Activated naive CD4-positive, alpha-beta T cell treated with anti-CD3 and anti-CD28 coated beads for 36 hours (primary cell): ENCODE measurements at regions of chr19 and their contacts with region 1.

Region 1: DNA sequence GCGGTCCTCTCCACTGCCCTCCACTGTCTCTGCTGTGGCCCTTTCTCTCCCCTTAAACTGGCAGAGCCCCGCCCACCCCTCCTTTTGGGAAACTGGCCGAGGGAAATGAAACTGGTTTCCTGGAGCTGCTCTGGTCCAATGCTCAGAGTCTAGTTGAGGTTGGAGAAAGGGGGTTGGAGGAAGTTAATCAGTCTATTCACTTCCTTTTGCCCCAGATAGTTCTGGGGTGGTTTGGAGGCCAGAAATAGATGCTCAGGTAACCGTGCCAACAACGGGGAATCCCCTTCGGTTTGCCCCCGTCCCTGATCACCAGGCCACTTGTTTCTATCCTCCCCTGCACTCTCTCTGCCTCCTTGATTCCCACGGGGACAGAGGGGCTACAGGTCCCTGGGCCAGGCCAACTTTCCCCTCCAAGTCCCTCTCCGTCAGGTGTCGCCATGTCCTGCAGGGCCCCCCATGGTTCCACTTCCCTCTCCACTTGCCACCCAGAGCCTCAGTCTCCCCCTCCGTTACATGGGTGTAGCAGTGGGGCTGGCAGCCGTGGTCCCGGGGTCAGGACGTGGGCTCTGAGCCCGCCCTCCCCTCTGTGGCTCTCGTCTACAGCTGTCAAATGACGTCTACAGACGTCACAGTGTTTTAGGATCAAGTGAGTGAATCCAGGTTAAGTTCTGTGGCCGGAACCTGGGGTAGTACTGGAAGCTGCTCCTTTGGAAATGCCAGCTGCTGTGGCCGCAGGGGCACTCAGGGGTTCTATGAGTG is at the start of gene IL4I1:
- DNase-seq: peak; percentile 85
- H3K4me3 Mint-ChIP-seq: peak within 1 kb of the TSS; percentile 67
- H3K27ac Mint-ChIP-seq: peak within 1 kb of the TSS; percentile 97
- H3K4me1 Mint-ChIP-seq: peaks cover 31% of the 10 kb centered on the region
- H3K27me3 Mint-ChIP-seq: no peaks in the 10 kb centered on the region
- total RNA-seq, gene IL4I1: 7.2 to 7.5 TPM

Region 2: DNA sequence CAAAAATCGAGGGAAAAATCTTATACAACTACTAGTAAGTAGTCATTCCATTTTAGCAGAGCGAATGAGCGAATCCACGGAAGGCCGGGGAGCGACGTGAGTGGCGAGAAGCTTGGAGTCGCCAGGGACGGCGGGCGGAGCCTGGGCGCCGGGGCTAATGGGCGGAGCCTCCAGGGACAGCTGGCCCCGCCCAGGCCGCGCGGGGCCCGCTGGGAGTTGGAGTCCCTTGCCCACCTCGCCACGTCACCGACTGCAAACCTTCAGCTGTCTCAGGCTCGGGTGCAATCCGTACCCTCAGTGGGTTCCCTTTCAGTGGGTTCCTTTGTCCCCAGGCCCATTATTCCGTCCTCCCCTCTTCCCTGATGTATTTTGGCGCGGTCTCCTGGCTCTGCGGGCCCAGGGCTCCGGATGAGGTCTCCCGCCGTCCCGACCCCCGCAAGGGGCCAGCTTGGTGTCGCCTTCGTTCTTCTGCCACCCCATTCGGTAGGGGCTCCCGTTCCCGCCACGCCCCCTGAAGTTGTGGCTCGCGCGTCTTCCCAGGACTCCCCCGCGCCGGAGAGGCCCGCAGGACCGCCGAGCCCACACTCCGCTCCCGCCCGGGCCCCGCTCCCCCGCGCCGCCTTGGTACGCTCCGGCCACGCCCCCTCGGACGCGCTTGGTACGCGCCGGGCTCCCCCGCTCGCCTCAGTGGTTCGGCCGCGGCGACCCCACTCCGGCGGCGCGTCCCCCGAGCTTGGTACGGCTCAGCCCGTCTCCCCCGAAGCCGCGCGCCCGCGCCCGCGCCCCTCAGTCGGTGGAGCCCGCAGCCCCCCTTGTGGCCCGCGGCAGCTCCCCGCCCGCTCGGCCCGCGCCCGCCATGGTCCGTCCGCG is 46.3 kb before region 1 on chr19 and contains the start of gene PTOV1:
- CTCF ChIA-PET with region 1: no interaction called
- intact Hi-C with region 1: loop called (anchors 1 kb)
- DNase-seq: peak; percentile 91
- H3K4me3 Mint-ChIP-seq: peak within 1 kb of the TSS; percentile 87
- H3K27ac Mint-ChIP-seq: peak within 1 kb of the TSS; percentile 95
- H3K4me1 Mint-ChIP-seq: peaks cover 42% of the 10 kb centered on the region
- H3K27me3 Mint-ChIP-seq: no peaks in the 10 kb centered on the region
- total RNA-seq, gene PTOV1: 66.0 to 68.0 TPM

Region 3: DNA sequence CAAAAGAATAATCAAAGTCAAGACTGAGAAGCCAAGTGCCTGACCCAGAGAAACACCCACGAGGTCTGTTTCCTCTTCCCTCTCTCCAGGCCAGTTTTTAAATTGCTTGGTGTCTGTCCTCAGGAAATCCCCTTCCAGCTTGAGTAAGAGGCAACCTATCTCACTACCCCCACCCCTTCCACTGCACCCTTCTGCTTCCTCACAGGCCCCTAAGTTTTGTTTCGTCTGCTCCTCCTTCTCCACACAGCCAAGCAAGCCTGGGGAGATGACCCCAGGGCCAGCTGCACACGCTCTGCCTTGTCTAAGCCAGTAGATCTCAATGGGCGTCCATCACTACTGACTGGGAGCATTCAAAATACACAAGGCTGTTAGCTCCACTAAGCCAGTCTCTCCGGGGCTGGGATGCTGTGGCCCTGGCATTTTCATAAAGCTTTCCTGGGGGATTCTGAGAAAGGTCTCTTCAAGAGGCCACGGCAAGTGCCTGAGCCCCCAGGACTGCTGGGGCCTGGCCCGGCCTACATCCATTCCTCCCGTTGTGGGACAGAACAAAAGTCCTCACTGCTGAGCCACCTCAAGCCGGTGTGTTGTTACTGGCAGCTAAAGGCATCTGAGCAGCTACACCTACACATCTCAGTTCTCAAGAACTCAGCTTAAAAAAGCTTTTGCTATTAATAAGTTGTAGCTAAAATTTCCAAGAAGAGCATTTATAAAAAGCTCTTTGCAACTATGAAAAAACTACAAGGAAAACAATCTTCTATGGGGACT is 14.5 kb after region 1 on chr19:
- CTCF ChIA-PET with region 1: interaction called, 4 read pairs
- intact Hi-C with region 1: loop called (anchors 1 kb)
- DNase-seq: peak; percentile 65
- H3K4me3 Mint-ChIP-seq: peak overlapping the region; percentile 17
- H3K27ac Mint-ChIP-seq: peak overlapping the region; percentile 90
- H3K4me1 Mint-ChIP-seq: peaks cover 48% of the 10 kb centered on the region
- H3K27me3 Mint-ChIP-seq: no peaks in the 10 kb centered on the region

Region 4: GRCh38 chr19:49929611-49930482 is 32.8 kb after region 1 on chr19:
- CTCF ChIA-PET with region 1: no interaction called
- intact Hi-C with region 1: loop called (anchors 1 kb)
- DNase-seq: peak; percentile 97
- H3K4me3 Mint-ChIP-seq: peak overlapping the region; percentile 89
- H3K27ac Mint-ChIP-seq: peak overlapping the region; percentile 100
- H3K4me1 Mint-ChIP-seq: peaks cover 60% of the 10 kb centered on the region
- H3K27me3 Mint-ChIP-seq: no peaks in the 10 kb centered on the region

Region 5: DNA sequence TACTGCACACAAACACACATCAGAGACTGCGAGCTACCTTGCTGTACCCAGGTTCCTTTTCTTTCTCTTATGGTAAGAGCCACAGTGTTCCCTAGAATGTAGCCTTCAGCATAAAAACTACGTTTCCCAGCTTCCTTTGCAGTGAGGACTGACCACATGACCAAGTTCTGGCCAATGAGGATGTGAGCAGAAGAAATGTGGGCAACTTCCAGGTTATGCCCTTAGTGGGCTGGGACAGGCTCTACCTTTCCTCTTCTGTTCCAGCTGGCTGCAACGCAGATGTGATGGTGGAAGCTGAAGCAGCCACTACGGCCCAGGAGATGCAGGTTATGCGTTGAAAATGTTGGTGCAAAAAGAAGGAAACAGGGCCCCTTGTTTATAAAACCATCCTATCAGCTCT is 100.7 kb after region 1 on chr19:
- CTCF ChIA-PET with region 1: no interaction called
- intact Hi-C with region 1: no loop called
- DNase-seq: peak; percentile 15
- H3K4me3 Mint-ChIP-seq: no peak overlapping the region
- H3K27ac Mint-ChIP-seq: no peak overlapping the region
- H3K4me1 Mint-ChIP-seq: no peaks in the 10 kb centered on the region
- H3K27me3 Mint-ChIP-seq: no peaks in the 10 kb centered on the region

Region 6: GRCh38 chr19:50061650-50062049 is 164.6 kb after region 1 on chr19:
- CTCF ChIA-PET with region 1: no interaction called
- intact Hi-C with region 1: no loop called
- DNase-seq: no peak
- H3K4me3 Mint-ChIP-seq: no peak overlapping the region
- H3K27ac Mint-ChIP-seq: no peak overlapping the region
- H3K4me1 Mint-ChIP-seq: no peaks in the 10 kb centered on the region
- H3K27me3 Mint-ChIP-seq: peaks cover 2% of the 10 kb centered on the region